ENCODE measurements at regions of chr3 and their contacts with region 1.

Region 1: GRCh38 chr3:152508705-152509104 is 240.0 kb downstream of the MBNL1 start:
- DNase-seq: no peak
- H3K4me3 Mint-ChIP-seq: no peak overlapping the region
- H3K27ac Mint-ChIP-seq: no peak overlapping the region
- H3K4me1 Mint-ChIP-seq: no peaks in the 10 kb centered on the region
- H3K27me3 Mint-ChIP-seq: no peaks in the 10 kb centered on the region
- CTCF ChIP-seq: peak; percentile 47

Region 2: GRCh38 chr3:152071924-152072323 is 436.8 kb before region 1 on chr3:
- CTCF ChIA-PET with region 1: no interaction called
- intact Hi-C with region 1: no loop called
- DNase-seq: peak; percentile 11
- H3K4me3 Mint-ChIP-seq: no peak overlapping the region
- H3K27ac Mint-ChIP-seq: no peak overlapping the region
- H3K4me1 Mint-ChIP-seq: no peaks in the 10 kb centered on the region
- H3K27me3 Mint-ChIP-seq: no peaks in the 10 kb centered on the region
- CTCF ChIP-seq: peak; percentile 29

Region 3: DNA sequence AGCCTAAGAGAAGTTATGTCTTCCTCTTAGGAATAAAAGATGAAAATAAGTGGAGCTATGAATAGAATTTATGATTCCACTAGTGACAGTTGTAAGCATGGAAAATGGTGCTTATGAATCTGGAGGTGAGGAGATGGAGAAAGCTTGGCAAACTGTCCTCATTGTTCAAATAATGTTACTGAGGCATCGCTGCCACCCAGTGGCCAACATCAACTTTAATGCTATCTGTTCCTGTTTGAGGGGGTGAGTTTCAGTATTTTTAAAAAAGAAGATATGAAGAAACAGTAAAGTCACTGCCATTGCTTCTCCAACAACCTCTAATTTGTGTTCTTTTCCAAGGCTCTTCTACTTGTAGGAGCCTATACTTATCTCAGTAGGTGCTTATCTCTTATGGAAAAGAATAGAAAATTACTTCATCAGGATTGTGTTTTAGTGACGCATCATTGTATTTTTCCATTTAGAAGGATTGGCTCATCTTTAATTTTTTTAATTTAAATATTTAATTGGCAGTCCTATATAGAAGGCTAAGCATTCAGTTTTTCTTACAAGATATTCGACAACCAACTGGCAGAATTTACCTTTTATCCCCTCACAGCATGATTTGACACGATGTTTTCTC is 65.9 kb after region 1 on chr3:
- CTCF ChIA-PET with region 1: interaction called, 7 read pairs
- intact Hi-C with region 1: loop called (anchors 1 kb)
- DNase-seq: peak; percentile 60
- H3K4me3 Mint-ChIP-seq: no peak overlapping the region
- H3K27ac Mint-ChIP-seq: no peak overlapping the region
- H3K4me1 Mint-ChIP-seq: no peaks in the 10 kb centered on the region
- H3K27me3 Mint-ChIP-seq: no peaks in the 10 kb centered on the region
- CTCF ChIP-seq: peak; percentile 47

Region 4: DNA sequence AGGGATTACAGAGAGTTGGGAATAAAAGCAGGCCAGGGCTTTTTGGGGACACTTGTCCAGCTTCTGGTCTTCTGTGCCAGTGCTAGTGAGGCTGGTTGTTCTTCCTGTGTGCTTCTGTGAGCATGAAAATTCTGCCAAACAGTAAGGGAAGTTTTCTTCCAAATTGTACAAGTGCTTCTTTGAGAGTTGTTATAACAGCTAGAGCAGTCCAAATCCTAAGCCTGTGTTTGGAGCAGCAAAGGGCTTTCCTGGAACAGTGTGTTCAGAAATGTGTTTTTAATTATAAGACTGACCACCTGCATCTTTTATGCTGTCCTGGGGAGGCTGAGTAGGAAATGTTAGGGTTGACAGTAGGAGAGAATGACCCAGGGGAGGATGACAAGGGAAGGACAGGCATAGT is 103.2 kb after region 1 on chr3:
- CTCF ChIA-PET with region 1: no interaction called
- intact Hi-C with region 1: no loop called
- DNase-seq: no peak
- H3K4me3 Mint-ChIP-seq: no peak overlapping the region
- H3K27ac Mint-ChIP-seq: no peak overlapping the region
- H3K4me1 Mint-ChIP-seq: peaks cover 10% of the 10 kb centered on the region
- H3K27me3 Mint-ChIP-seq: no peaks in the 10 kb centered on the region
- CTCF ChIP-seq: no peak

Region 5: GRCh38 chr3:152713989-152714388 is 205.3 kb after region 1 on chr3:
- CTCF ChIA-PET with region 1: no interaction called
- intact Hi-C with region 1: loop called (anchors 2 kb)
- DNase-seq: no peak
- H3K4me3 Mint-ChIP-seq: no peak overlapping the region
- H3K27ac Mint-ChIP-seq: no peak overlapping the region
- H3K4me1 Mint-ChIP-seq: peaks cover 3% of the 10 kb centered on the region
- H3K27me3 Mint-ChIP-seq: no peaks in the 10 kb centered on the region
- CTCF ChIP-seq: no peak

Region 6: DNA sequence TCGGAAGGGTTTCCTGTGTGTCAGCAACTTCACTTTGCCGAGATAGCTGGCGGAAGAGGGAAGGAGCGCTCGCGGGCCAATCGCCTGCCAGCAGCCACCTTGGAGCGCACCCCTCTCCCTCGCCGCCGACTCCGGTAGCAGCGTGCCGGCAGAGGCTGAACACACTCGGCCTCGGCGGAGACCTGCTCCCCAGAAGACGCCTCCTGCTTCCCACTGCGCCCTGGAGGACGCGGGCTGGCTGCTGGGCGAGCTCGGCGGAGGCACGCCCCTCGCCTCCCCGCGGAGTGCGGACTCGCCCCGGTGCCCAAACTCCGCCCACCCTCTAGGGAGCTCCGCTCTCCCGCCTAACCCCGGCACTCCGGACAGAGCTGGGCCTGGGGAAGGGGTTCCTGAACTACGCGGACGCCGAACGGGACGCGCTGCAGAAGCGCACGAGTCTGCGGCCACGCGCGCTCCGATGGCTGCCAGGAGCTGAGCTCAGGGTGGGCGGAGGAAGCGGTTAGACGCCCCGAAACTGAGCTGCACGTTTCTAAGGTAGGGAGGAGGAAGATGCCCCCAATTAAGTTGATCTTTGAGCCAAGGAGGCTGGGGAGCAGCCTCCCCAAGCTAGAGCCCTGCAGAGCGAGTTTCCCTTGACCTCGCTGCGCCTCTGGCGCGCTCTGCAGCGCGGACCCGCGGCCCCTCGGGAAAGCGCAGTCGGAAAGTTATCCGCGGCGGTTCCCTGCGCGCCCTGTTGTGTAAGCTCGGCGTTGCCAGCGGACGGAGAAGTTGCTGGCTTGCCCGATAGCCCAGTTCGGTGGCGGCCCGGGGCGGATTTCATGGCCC is 326.3 kb after region 1 on chr3 and contains the start of gene P2RY1:
- CTCF ChIA-PET with region 1: interaction called, 4 read pairs
- intact Hi-C with region 1: loop called (anchors 5 kb)
- DNase-seq: peak; percentile 91
- H3K4me3 Mint-ChIP-seq: peak within 1 kb of the TSS; percentile 85
- H3K27ac Mint-ChIP-seq: peak within 1 kb of the TSS; percentile 46
- H3K4me1 Mint-ChIP-seq: peaks cover 59% of the 10 kb centered on the region
- H3K27me3 Mint-ChIP-seq: no peaks in the 10 kb centered on the region
- CTCF ChIP-seq: peak; percentile 52
- total RNA-seq, gene P2RY1: 19.6 and 21.0 TPM in 2 replicates

Region 7: GRCh38 chr3:152937234-152937633 is 428.5 kb after region 1 on chr3:
- CTCF ChIA-PET with region 1: no interaction called
- intact Hi-C with region 1: loop called (anchors 10 kb)
- DNase-seq: no peak
- H3K4me3 Mint-ChIP-seq: no peak overlapping the region
- H3K27ac Mint-ChIP-seq: no peak overlapping the region
- H3K4me1 Mint-ChIP-seq: peaks cover 4% of the 10 kb centered on the region
- H3K27me3 Mint-ChIP-seq: no peaks in the 10 kb centered on the region
- CTCF ChIP-seq: no peak

Measured in Calu3 (cell line).